Cardiac septum (tissue), 1 donor: ENCODE measurements at regions of chr6 and their contacts with region 1.

Region 1: GRCh38 chr6:52577022-52577777 is at the start of gene TRAM2:
- DNase-seq: peak; percentile 93
- total RNA-seq, gene TRAM2: 10.3 TPM

Region 2: DNA sequence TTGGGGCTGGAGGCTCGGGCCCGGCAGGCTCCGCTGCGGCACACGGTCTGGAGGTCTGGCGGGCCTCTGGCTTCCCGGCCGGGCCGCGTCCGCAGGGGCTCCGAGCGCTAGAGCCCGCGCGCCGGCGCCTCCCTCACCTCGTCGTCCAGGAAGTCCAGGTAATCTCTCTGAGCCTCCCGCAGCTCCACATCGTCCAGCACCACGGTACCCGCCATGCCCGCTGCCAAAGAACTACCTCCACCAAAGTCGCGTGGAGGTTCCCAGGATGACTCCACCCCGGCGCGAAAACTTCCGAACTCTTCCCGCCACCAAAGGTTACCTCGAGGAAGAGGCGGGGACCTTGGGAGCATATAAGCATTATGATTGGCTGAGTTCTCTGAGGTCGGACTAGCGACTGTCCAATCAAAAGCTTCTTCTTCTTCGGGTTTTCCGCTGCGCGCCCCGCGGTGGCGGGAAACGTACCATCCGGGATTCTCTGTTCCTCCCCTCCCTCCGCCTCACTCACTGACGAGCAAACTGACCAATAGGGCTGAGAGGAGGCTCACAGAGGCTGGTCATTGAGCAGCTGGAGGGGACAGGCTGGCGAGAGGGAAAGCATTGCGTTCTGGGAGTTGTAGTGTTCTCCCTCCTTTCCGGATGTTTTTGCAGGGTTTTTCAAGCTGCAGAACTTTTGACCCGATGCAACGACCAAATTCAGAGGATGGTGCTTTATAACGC is 292.6 kb before region 1 on chr6 and contains the start of gene MCM3:
- intact Hi-C with region 1: loop called (anchors 10 kb)
- DNase-seq: peak; percentile 98
- total RNA-seq, gene MCM3: 21.0 TPM

Region 3: GRCh38 chr6:52503848-52504781 is 73.1 kb before region 1 on chr6:
- intact Hi-C with region 1: loop called (anchors 2 kb)
- DNase-seq: peak; percentile 94

Region 4: GRCh38 chr6:52512199-52512598 is 65.0 kb before region 1 on chr6:
- intact Hi-C with region 1: loop called (anchors 2 kb)
- DNase-seq: no peak

Region 5: GRCh38 chr6:52598123-52598823 is 21.1 kb after region 1 on chr6:
- intact Hi-C with region 1: loop called (anchors 2 kb)
- DNase-seq: no peak

Region 6: DNA sequence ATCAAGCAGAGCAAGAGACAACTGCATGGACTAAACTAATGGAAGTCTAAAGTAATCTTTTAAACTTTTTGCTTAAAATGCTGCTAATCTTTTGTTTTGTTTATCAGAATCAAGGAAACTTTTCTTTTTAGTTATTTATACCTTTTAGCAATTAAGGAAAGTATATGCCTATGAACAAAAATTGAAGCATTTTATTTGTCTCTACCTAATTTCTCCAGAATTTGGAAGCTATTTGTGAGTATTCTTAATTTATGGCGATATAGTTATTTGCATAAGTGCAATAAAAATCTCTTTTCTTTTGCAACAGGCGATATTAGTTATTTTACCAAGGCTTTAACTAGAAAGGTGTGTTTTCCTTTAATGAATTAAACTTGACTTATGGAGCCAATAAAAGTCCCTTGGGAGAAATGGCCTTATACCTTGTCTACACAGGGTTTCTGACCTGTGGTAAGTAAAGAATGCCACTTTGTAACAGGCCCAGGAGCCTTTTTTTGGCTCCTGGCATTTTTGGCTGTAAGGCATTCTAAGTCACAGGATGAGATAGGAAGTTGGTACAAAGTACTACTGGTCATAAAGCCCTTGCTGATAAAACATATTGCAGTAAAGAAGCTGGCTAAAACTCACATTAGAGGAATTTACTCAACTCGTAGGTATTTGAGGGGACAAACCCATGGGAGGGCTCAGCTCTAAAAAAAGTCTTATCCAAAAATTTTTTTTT is 130.9 kb after region 1 on chr6:
- intact Hi-C with region 1: no loop called
- DNase-seq: no peak